PC-3 (cell line): ENCODE measurements at regions of chr2 and their contacts with region 1.

Region 1: GRCh38 chr2:220533485-220533884 is 906.1 kb downstream of the SLC4A3 start:
- DNase-seq: peak; percentile 84
- ATAC-seq: peak; percentile 99
- H3K4me3 ChIP-seq: no peak overlapping the region
- H3K27ac ChIP-seq: peak overlapping the region; percentile 31
- H3K4me1 ChIP-seq: peaks cover 5% of the 10 kb centered on the region
- H3K27me3 ChIP-seq: no peaks in the 10 kb centered on the region
- CTCF ChIP-seq: peak; percentile 60

Region 2: DNA sequence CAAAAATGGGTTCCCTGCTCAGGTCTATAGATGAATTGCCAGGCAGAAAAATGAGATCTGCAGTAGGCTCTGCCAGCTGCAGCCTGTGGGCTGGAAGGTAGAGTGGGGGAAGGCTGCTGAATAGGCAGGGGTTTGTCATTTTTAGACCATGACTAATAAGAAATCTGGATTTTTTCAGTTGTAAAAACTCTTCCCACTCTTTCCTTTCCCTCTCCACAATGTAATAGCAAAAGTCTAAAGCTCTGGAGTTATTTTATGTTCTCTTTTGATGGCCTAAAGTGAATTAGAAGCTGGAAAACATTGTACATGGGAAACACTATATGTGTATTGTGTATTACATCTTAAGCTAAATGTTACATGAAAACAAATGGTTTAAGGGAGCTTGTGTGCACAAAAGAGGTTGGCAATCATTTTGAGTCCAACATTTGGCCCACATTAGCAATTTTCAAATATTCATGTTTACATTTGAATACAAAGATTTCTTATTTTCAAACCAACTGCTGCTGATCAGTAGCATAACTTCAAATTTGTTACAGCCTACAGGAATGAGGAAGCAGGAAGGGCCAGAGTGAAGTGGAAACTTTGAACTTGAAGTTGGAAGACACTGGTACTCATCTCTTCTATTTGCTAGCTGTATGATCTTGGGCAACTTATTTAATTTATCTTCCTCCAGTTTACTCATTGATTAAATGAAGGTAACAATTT is 498.9 kb before region 1 on chr2:
- CTCF ChIA-PET with region 1: no interaction called
- POLR2A ChIA-PET with region 1: interaction called, 13 read pairs
- intact Hi-C with region 1: no loop called
- DNase-seq: peak; percentile 58
- ATAC-seq: peak; percentile 84
- H3K4me3 ChIP-seq: no peak overlapping the region
- H3K27ac ChIP-seq: peak overlapping the region; percentile 9; the same call in 1 of the 2 replicates
- H3K4me1 ChIP-seq: peaks cover 13% of the 10 kb centered on the region
- H3K27me3 ChIP-seq: no peaks in the 10 kb centered on the region
- CTCF ChIP-seq: no peak